Ascending aorta (tissue), 2 donors: ENCODE measurements at regions of chr1 and their contacts with region 1.

Region 1: DNA sequence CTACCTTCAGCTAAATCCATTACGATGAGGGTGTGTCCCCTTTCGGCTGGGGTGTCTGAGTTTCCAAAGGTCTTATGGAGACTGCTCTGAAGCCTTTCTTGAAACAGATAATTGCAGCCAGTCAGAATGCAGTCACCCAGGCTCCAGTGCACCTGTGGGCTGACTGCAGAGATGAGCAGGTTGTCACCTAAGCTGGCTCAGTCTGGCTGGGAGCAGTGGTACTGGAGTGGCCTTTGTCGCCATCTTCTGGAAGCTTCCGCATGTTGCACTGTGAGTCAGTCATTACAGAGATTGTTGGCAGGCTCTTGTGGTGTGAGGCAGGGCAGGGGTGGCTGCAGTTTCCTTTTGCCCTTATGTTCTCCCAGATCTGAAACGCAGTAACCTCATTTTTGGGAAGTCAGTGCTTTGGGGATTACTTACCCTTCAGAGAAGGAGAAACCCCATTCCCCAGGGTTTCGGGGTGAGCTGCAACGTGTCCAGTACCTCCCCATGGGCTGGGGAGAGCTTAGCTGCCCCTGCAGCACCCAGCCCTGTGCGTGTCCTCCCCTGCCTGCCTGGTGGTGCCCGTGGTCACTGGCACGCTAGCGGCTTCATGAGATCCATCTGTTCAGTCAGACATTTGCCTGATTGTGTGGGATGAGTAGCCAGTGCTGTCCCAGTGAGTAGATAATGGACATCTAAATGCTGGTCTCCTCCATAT is 48.0 kb downstream of the SMYD2 start:
- DNase-seq: peak in 1 of 2 donors; percentile 84
- H3K4me3 ChIP-seq: no peak overlapping the region
- H3K27ac ChIP-seq: no peak overlapping the region
- H3K4me1 ChIP-seq: no peaks in the 10 kb centered on the region
- H3K27me3 ChIP-seq: no peaks in the 10 kb centered on the region
- CTCF ChIP-seq: peak; percentile 80 to 91 (median 89)

Region 2: GRCh38 chr1:214214851-214215250 is 114.1 kb before region 1 on chr1:
- intact Hi-C with region 1: loop called (anchors 1 kb)
- DNase-seq: no peak
- H3K4me3 ChIP-seq: no peak overlapping the region
- H3K27ac ChIP-seq: no peak overlapping the region
- H3K4me1 ChIP-seq: no peaks in the 10 kb centered on the region
- H3K27me3 ChIP-seq: no peaks in the 10 kb centered on the region
- CTCF ChIP-seq: no peak

Region 3: GRCh38 chr1:214261206-214262123 is 67.5 kb before region 1 on chr1:
- intact Hi-C with region 1: loop called (anchors 1 kb)
- DNase-seq: peak in 1 of 2 donors; percentile 89
- H3K4me3 ChIP-seq: no peak overlapping the region
- H3K27ac ChIP-seq: no peak overlapping the region
- H3K4me1 ChIP-seq: no peaks in the 10 kb centered on the region
- H3K27me3 ChIP-seq: no peaks in the 10 kb centered on the region
- CTCF ChIP-seq: peak; percentile 82 to 93 (median 92)